HEK293 (cell line): ENCODE measurements at regions of chr1 and their contacts with region 1.

Region 1: DNA sequence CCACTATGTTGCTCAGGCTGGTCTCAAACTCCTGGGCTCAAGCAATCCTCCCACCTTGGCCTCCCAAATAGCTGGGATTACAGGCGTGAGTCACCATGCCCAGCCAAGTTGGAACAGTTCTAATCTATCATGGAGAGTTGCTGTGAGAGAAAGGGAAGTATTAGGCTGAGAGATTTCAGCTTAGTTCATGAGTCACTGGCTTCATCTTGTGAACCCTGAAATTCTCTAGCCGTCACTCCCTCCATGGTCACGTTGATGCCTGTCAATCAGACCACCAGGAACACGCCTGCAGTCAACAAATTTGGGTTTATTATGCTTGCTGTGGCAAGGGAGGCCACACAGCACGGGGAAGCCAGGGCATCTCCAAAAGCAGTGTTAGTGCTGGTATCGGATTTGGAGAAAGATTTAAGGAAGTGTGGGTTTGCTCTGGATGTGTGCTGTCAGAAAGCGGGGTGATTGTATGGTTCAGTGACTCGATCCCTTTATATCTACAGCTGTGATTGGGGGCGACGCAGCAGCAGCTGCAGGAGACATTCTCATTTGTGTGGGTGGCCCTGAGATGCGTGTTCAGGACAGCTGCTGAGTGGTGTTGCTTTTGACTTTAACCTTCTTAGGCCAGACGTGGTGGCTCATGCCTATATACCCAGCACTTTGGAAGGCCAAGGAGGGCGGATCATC is 18.7 kb downstream of the UQCRHL start:
- H3K4me3 ChIP-seq: no peak overlapping the region
- H3K27ac ChIP-seq: no peak overlapping the region
- H3K4me1 ChIP-seq: no peaks in the 10 kb centered on the region
- CTCF ChIP-seq: no peak

Region 2: DNA sequence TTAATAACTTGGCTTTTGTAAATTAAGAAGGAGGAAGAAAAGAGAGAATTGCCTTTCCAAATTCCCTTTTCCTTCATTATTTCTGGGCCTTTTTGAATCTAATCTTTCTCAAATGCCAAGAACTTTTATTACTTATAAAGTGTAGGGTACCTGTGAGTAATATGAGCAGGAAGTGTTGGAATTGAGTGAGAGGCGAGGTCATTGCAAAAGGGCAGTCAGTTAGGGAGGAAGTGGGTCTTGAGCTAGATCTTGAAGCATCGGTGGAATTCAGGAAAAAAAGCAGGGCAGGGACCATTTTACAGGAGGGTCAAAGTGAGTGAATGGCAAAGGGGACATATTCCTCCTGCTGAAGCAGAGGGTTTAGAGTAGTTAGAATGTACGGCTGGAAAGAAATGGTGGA is 148.1 kb before region 1 on chr1:
- CTCF ChIA-PET with region 1: no interaction called
- POLR2A ChIA-PET with region 1: no interaction called
- H3K4me3 ChIP-seq: no peak overlapping the region
- H3K27ac ChIP-seq: no peak overlapping the region
- H3K4me1 ChIP-seq: no peaks in the 10 kb centered on the region
- CTCF ChIP-seq: no peak

Region 3: GRCh38 chr1:15777909-15778707 is 10.7 kb before region 1 on chr1:
- CTCF ChIA-PET with region 1: interaction called, 14 read pairs
- POLR2A ChIA-PET with region 1: no interaction called
- H3K4me3 ChIP-seq: no peak overlapping the region
- H3K27ac ChIP-seq: no peak overlapping the region
- H3K4me1 ChIP-seq: no peaks in the 10 kb centered on the region
- CTCF ChIP-seq: no peak

Region 4: GRCh38 chr1:15825800-15826199 is 37.0 kb after region 1 on chr1:
- CTCF ChIA-PET with region 1: interaction called, 10 read pairs
- POLR2A ChIA-PET with region 1: interaction called, 5 read pairs
- H3K4me3 ChIP-seq: no peak overlapping the region
- H3K27ac ChIP-seq: no peak overlapping the region
- H3K4me1 ChIP-seq: peaks cover 5% of the 10 kb centered on the region
- CTCF ChIP-seq: no peak

Region 5: DNA sequence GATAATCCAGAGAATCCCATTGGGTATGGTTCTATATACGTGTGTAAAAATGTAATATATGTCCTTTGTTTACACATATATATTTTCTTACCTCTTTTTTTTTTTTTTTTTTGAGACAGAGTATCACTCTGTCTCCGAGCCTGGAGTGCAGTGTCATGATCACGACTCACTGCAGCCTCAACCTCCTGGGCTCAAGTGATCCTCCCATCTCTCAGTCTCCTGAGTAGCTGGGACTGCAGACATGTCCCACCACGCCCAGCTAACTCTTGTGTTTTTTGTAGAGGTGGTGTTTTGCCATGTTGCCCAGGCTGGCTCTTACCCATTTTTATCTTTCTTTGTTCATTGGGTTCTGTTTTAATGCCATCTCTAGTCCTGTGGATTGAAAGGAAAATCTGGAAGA is 127.7 kb after region 1 on chr1:
- CTCF ChIA-PET with region 1: interaction called, 11 read pairs
- POLR2A ChIA-PET with region 1: no interaction called
- H3K4me3 ChIP-seq: no peak overlapping the region
- H3K27ac ChIP-seq: no peak overlapping the region
- H3K4me1 ChIP-seq: no peaks in the 10 kb centered on the region
- CTCF ChIP-seq: no peak

Region 6: GRCh38 chr1:15949453-15950245 is 160.9 kb after region 1 on chr1:
- CTCF ChIA-PET with region 1: interaction called, 19 read pairs
- POLR2A ChIA-PET with region 1: no interaction called
- H3K4me3 ChIP-seq: no peak overlapping the region
- H3K27ac ChIP-seq: peak overlapping the region; percentile 54; the same call in 1 of the 2 replicates
- H3K4me1 ChIP-seq: peaks cover 12% of the 10 kb centered on the region
- CTCF ChIP-seq: no peak

Region 7: GRCh38 chr1:16048573-16049189 is 259.9 kb after region 1 on chr1:
- CTCF ChIA-PET with region 1: no interaction called
- POLR2A ChIA-PET with region 1: no interaction called
- H3K4me3 ChIP-seq: peak overlapping the region; percentile 14
- H3K27ac ChIP-seq: no peak overlapping the region
- H3K4me1 ChIP-seq: no peaks in the 10 kb centered on the region
- CTCF ChIP-seq: no peak